CD4-positive, alpha-beta T cell (primary cell): ENCODE measurements at regions of chr10 and their contacts with region 1.

Region 1: DNA sequence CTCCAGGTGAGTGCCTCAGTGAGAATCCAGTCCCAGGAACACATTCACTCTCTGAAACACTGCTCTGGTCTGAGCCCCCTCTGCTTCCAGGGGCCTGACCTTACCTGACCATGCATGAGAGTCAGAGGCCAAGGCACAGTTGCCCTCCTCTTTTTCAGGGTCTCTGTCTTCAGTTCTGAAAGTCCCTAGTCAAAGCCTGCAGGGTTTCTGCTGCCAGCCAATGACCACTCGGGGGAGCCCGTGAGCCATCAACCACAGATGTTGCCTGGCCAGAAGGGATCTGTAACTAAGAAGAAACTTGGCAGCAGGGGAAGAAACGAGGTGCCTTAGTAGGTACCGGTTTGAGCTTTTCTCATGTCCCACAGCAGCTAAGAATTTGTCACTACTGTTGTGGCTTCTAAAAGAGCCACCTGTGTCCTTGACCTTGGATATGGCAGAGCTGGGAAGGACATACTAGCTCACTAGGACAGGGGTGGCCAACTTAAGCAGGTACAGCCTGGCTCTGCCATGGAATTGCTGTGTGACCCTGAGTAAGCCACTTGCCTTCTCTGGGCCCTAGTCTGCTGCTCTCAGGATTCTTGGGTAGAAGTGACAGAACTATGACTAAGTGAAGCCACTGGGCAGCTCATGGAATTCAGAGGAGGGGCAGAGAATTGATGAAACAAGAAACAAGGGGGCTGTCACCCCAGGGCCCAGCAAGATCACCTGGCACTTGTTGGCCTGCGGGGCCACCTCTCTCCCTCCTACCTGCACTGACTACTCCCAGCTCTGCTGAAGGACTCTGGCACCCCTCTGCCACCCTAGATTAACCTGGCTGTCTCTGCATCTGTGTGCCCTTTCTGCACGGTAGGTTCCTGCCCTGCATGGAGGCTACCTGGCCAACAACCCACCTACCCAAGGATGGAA is 83.8 kb upstream of the GPR26 start:
- DNase-seq: peak; percentile 24 to 70 (median 47)
- ATAC-seq: no peak
- H3K4me3 ChIP-seq: no peak overlapping the region
- H3K4me3 Mint-ChIP-seq: no peak overlapping the region
- H3K27ac ChIP-seq: no peak overlapping the region
- H3K27ac Mint-ChIP-seq: no peak overlapping the region
- H3K4me1 ChIP-seq: no peaks in the 10 kb centered on the region
- H3K4me1 Mint-ChIP-seq: no peaks in the 10 kb centered on the region
- H3K27me3 ChIP-seq: peaks cover 28 to 31% of the 10 kb centered on the region in 2 experiments
- H3K27me3 Mint-ChIP-seq: peaks cover 48% of the 10 kb centered on the region
- CTCF ChIP-seq: peak; percentile 67

Region 2: GRCh38 chr10:123967396-123968243 is 385.3 kb after region 1 on chr10:
- CTCF ChIA-PET with region 1: no interaction called
- POLR2A ChIA-PET with region 1: no interaction called
- intact Hi-C with region 1: loop called in 1 of 2 experiments (anchors 5 kb)
- DNase-seq: peak in 6 of 14 experiments; percentile 10 to 55 (median 36)
- ATAC-seq: no peak
- H3K4me3 ChIP-seq: no peak overlapping the region
- H3K4me3 Mint-ChIP-seq: no peak overlapping the region
- H3K27ac ChIP-seq: no peak overlapping the region
- H3K27ac Mint-ChIP-seq: no peak overlapping the region
- H3K4me1 ChIP-seq: peaks cover 4% of the 10 kb centered on the region
- H3K4me1 Mint-ChIP-seq: no peaks in the 10 kb centered on the region
- H3K27me3 ChIP-seq: peaks cover 31 to 55% of the 10 kb centered on the region in 2 experiments
- H3K27me3 Mint-ChIP-seq: peaks cover 77% of the 10 kb centered on the region
- CTCF ChIP-seq: peak; percentile 26